ENCODE measurements at regions of chr1 and their contacts with region 1.

Region 1: DNA sequence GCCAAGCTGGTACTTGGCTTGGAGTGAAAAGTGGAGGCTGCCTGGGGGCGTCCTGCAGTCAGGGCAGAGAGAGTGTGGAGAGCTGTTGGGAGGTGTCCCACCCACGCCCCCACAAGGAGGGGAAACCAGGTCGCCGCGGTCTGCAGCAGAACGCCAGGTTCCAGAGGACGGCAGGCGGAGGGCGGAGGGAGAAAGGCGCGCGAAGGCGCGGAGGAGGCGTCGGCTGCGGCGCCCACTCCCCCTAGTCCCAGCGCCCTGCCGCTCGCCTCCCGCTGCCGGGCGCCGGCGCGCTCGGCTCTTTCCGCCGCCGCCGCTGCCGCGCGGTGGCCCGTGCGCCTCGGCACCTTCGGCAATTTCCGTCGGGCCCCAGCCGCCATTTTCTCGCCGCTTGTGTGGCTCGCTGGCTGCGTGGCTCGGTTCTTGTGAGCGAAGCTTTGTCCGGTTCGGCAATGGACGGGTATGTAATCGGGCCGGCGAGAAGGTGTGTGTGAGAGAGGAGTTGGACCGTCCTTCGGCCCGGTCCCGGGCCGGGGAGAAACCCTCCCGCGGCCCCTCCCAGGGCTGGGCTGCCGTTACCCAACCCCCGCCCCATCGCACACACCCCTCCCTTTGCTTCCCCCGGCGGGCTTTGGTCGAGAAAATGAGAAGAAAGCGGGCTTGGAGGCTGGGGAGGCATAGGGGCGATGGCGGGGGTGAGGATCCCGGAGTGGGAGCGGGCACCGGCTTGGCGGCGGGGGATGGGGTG is at the start of gene PTBP2:
- DNase-seq: peak; percentile 67 to 92 (median 78)
- ATAC-seq: peak; percentile 89
- H3K4me3 ChIP-seq: peak within 1 kb of the TSS; percentile 85
- H3K4me3 Mint-ChIP-seq: peak within 1 kb of the TSS; percentile 98
- H3K27ac ChIP-seq: peak within 1 kb of the TSS; percentile 86
- H3K27ac Mint-ChIP-seq: peak within 1 kb of the TSS; percentile 94
- H3K4me1 ChIP-seq: peaks cover 20% of the 10 kb centered on the region
- H3K4me1 Mint-ChIP-seq: peaks cover 33% of the 10 kb centered on the region
- H3K27me3 ChIP-seq: no peaks in the 10 kb centered on the region
- H3K27me3 Mint-ChIP-seq: no peaks in the 10 kb centered on the region
- CTCF ChIP-seq: no peak
- total RNA-seq, gene PTBP2: 32.6 to 34.3 TPM

Region 2: DNA sequence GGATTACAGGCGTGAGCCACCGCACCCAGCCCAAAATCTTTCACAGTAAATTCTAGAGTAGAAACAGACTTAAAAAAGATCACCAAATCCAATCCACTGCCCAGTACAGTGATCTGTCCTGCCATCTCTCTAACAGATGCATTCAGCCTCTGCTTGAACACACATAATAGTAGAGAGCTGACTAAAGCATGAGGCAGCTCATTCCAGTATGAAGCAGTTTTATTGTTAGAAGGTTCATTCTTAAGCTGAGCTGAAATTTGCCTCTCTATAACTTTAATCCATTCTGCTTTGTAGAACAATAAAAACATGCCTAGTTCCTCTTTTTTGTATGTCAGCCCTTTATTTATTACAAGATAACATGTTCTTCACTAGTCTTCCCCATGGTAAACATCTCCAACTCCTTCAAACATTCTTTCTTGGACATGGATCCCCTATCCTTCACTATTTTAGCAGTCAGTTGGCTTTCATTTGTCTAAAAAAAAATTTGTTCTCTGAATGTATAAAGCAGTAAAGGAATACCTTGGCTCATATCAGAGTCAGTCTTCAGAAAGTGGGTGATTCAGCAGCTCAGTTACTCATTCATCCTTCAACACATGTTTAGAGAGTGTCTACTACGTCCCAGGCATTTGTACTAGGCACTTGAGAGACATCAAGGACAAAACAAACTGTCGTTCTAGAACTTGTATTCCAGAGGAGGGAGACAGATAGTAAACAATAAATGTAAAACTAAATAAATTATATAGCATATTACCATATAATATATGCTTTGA is 10.7 kb before region 1 on chr1:
- CTCF ChIA-PET with region 1: no interaction called
- POLR2A ChIA-PET with region 1: no interaction called
- intact Hi-C with region 1: no loop called
- DNase-seq: no peak
- ATAC-seq: no peak
- H3K4me3 ChIP-seq: no peak overlapping the region
- H3K4me3 Mint-ChIP-seq: no peak overlapping the region
- H3K27ac ChIP-seq: no peak overlapping the region
- H3K27ac Mint-ChIP-seq: no peak overlapping the region
- H3K4me1 ChIP-seq: no peaks in the 10 kb centered on the region
- H3K4me1 Mint-ChIP-seq: no peaks in the 10 kb centered on the region
- H3K27me3 ChIP-seq: no peaks in the 10 kb centered on the region
- H3K27me3 Mint-ChIP-seq: peaks cover 9% of the 10 kb centered on the region
- CTCF ChIP-seq: no peak

Region 3: GRCh38 chr1:96771847-96772246 is 50.3 kb after region 1 on chr1:
- CTCF ChIA-PET with region 1: interaction called, 3 read pairs
- POLR2A ChIA-PET with region 1: no interaction called
- intact Hi-C with region 1: loop called in 1 of 2 experiments (anchors 10 kb)
- DNase-seq: no peak
- ATAC-seq: no peak
- H3K4me3 ChIP-seq: no peak overlapping the region
- H3K4me3 Mint-ChIP-seq: no peak overlapping the region
- H3K27ac ChIP-seq: no peak overlapping the region
- H3K27ac Mint-ChIP-seq: no peak overlapping the region
- H3K4me1 ChIP-seq: no peaks in the 10 kb centered on the region
- H3K4me1 Mint-ChIP-seq: peaks cover 9% of the 10 kb centered on the region
- H3K27me3 ChIP-seq: no peaks in the 10 kb centered on the region
- H3K27me3 Mint-ChIP-seq: no peaks in the 10 kb centered on the region
- CTCF ChIP-seq: no peak